Activated CD8-positive, alpha-beta memory T cell treated with anti-CD3 and anti-CD28 coated beads, Interleukin-2, amount 10 ng/mL, durations not matched to agents 7 days and 5 days (primary cell): ENCODE measurements at regions of chr19 and their contacts with region 1.

Region 1: GRCh38 chr19:3102228-3103140 is 8.3 kb downstream of the GNA11 start:
- DNase-seq: no peak
- ATAC-seq: no peak
- H3K4me3 Mint-ChIP-seq: no peak overlapping the region
- H3K27ac Mint-ChIP-seq: no peak overlapping the region
- H3K4me1 Mint-ChIP-seq: peaks cover 12% of the 10 kb centered on the region
- H3K27me3 Mint-ChIP-seq: peaks cover 25% of the 10 kb centered on the region

Region 2: GRCh38 chr19:2962045-2962561 is 140.4 kb before region 1 on chr19:
- CTCF ChIA-PET with region 1: interaction called, 68 read pairs
- DNase-seq: peak; percentile 51
- ATAC-seq: peak; percentile 75
- H3K4me3 Mint-ChIP-seq: no peak overlapping the region
- H3K27ac Mint-ChIP-seq: no peak overlapping the region
- H3K4me1 Mint-ChIP-seq: peaks cover 5% of the 10 kb centered on the region
- H3K27me3 Mint-ChIP-seq: peaks cover 3% of the 10 kb centered on the region

Region 3: GRCh38 chr19:3035542-3036118 is 66.9 kb before region 1 on chr19:
- CTCF ChIA-PET with region 1: interaction called, 28 read pairs
- DNase-seq: peak; percentile 98
- ATAC-seq: peak; percentile 96
- H3K4me3 Mint-ChIP-seq: peak overlapping the region; percentile 73
- H3K27ac Mint-ChIP-seq: peak overlapping the region; percentile 94
- H3K4me1 Mint-ChIP-seq: peaks cover 12% of the 10 kb centered on the region
- H3K27me3 Mint-ChIP-seq: peaks cover 28% of the 10 kb centered on the region

Region 4: GRCh38 chr19:3125900-3126524 is 23.5 kb after region 1 on chr19:
- CTCF ChIA-PET with region 1: interaction called, 51 read pairs
- DNase-seq: peak; percentile 69
- ATAC-seq: peak; percentile 93
- H3K4me3 Mint-ChIP-seq: no peak overlapping the region
- H3K27ac Mint-ChIP-seq: no peak overlapping the region
- H3K4me1 Mint-ChIP-seq: peaks cover 16% of the 10 kb centered on the region
- H3K27me3 Mint-ChIP-seq: no peaks in the 10 kb centered on the region

Region 5: DNA sequence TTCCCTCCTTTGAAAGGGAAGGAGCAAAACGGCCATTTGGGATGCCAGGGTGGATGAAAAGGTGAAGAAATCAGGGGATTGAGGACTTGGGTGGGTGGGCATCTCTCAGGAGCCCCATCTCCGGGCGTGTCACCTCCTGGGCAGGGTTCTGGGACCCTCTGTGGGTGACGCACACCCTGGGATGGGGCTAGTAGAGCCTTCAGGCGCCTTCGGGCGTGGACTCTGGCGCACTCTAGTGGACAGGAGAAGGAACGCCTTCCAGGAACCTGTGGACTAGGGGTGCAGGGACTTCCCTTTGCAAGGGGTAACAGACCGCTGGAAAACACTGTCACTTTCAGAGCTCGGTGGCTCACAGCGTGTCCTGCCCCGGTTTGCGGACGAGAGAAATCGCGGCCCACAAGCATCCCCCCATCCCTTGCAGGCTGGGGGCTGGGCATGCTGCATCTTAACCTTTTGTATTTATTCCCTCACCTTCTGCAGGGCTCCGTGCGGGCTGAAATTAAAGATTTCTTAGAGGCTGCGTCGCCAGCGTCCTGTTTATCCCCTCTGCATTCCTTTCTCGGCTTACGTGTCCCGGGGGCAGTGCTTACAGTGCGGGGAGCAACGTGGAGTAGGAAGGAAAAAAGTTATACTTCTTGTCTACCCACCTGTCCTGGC is 60.9 kb after region 1 on chr19:
- CTCF ChIA-PET with region 1: interaction called, 22 read pairs
- DNase-seq: peak; percentile 82
- ATAC-seq: peak; percentile 90
- H3K4me3 Mint-ChIP-seq: no peak overlapping the region
- H3K27ac Mint-ChIP-seq: peak overlapping the region; percentile 46
- H3K4me1 Mint-ChIP-seq: peaks cover 45% of the 10 kb centered on the region
- H3K27me3 Mint-ChIP-seq: no peaks in the 10 kb centered on the region

Region 6: DNA sequence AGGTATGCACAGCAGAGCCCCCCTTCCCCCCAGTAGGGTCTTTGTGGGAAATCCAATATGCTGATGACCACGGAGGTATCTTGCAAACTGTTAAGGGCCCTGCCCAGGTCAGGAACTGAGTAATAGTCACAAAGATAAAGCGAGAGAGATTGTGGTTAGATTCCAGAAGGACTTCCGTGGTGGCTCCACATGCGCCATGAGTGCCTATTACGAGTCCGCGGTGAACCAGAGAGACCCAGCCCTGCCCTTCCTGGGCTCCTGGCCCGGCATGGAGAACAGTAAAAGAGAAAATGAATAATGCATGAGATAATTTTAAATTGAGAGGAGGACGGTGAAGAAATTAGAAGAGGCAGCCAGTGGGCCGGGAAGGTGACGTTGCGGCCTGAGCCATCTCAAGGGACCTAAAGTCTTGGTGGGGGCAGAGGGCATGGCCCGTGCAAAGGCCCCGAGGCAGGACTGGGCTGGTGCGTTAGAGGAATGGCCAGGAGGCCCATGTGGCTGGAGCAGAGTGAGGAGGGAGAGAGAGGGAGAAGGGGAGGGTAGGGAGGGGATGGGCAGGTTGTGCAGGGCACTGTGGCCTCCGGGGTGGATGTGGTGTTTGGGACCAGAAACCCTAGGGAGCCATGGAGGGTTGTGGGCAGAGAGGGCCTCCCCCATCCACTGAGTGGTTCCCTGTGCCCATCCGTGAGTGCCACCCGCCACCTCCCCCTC is 217.3 kb after region 1 on chr19:
- CTCF ChIA-PET with region 1: no interaction called
- DNase-seq: no peak
- ATAC-seq: no peak
- H3K4me3 Mint-ChIP-seq: no peak overlapping the region
- H3K27ac Mint-ChIP-seq: no peak overlapping the region
- H3K4me1 Mint-ChIP-seq: peaks cover 2% of the 10 kb centered on the region
- H3K27me3 Mint-ChIP-seq: no peaks in the 10 kb centered on the region